IMR-90 (cell line): ENCODE measurements at regions of chr1 and their contacts with region 1.

Region 1: GRCh38 chr1:52296345-52296744 is 69.7 kb downstream of the CC2D1B start:
- DNase-seq: peak; percentile 68
- ATAC-seq: peak; percentile 92
- H3K4me3 ChIP-seq: no peak overlapping the region
- H3K27ac ChIP-seq: no peak overlapping the region
- H3K4me1 ChIP-seq: no peaks in the 10 kb centered on the region
- H3K27me3 ChIP-seq: no peaks in the 10 kb centered on the region
- CTCF ChIP-seq: peak; percentile 88
- POLR2A ChIP-seq: no peak
- RAD21 ChIP-seq: peak; percentile 90

Region 2: DNA sequence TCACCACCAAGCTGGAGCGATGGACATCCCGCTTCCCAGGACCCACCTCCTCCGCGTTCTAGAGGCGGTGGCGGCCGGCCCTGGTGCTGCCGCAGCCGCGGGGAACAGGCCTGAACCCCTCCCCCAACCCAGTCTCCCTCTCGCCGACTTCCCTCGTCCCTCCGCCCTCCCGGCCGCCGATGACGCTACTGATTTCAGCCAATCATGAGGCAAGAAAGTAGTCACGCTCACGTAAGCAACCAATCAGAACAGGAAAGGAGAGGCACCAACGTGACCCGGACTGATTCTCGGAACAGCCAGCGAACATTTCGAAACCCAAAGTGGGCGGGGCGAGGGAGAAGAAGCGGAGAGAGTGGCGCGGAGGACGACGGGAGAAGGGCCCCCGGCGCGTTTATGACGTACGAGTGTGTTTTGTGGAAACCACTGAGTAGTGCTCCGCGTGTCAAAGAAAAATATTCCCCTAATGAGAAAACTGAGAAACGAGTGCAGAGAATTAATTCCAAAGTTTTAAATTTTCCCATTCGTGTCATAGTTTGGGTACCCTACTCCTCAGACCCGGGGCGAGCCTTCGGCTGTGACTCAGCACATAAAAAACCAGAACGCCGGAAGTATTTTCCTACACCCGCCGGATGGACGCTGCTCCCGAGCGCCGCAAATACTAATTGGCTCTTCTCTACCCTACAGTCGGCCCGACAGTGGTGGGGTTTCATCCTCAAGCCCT is 417.6 kb before region 1 on chr1 and contains the start of gene NRDC:
- CTCF ChIA-PET with region 1: no interaction called
- POLR2A ChIA-PET with region 1: no interaction called
- dilution Hi-C with region 1: no loop called
- in situ Hi-C with region 1: loop called (anchors 25 kb)
- intact Hi-C with region 1: no loop called
- DNase-seq: peak; percentile 100
- ATAC-seq: peak; percentile 92
- H3K4me3 ChIP-seq: peak within 1 kb of the TSS; percentile 83
- H3K27ac ChIP-seq: peak within 1 kb of the TSS; percentile 95
- H3K4me1 ChIP-seq: peaks cover 3% of the 10 kb centered on the region; the same call in 1 of the 2 replicates
- H3K27me3 ChIP-seq: no peaks in the 10 kb centered on the region
- CTCF ChIP-seq: no peak
- POLR2A ChIP-seq: peak; percentile 88
- RAD21 ChIP-seq: peak; percentile 10; the same call in 1 of the 2 replicates
- total RNA-seq, gene NRDC: 75.8 and 78.0 TPM in 2 replicates

Region 3: DNA sequence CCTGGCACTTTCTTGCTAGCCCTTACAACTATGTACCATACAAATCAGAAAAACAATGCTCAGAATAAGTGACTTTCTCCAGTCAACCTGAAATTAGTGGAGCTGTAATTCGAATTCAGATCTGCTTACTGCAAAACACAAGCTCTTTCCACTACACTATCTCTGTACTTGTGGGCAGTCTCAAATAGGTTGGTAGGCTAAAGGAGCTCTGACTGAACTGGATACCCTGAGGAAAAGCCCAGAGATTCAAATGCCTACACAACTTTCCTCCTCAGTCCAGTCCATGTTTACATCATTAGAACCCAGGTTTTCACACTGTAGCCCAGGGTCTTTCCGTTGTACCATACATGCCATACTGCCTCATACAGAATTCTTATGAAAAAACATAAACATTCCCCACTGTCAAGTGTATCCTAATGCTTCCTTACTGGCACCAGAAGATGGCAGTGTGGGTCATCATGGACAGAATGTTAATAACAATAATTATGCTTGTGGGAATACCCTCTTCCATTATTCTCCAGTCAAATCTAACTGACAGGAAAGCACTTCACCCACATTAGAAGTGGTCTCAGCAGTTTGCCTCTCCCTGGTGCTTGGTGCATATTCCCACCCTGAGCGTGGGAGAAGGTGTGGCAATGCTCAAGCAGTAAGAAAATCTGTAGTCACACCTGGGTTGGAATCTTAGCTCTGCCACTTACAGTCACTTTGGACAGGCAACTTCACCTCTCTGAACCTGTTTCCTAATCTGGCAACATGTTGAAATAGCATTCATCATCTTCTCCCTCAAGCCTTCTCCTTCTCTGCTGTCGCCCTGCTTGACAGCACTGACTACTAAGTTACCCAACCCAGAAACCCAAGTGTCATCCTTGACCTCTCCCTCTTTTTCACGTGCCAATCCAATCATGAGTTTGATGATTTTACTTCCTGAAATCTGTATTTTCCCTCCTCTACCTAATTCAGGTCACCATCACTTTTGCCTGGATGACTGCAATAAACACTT is 168.9 kb before region 1 on chr1:
- CTCF ChIA-PET with region 1: interaction called, 20 read pairs
- POLR2A ChIA-PET with region 1: no interaction called
- dilution Hi-C with region 1: no loop called
- in situ Hi-C with region 1: loop called (anchors 5 kb)
- intact Hi-C with region 1: loop called (anchors 1 kb)
- DNase-seq: peak; percentile 77
- ATAC-seq: peak; percentile 99
- H3K4me3 ChIP-seq: no peak overlapping the region
- H3K27ac ChIP-seq: no peak overlapping the region
- H3K4me1 ChIP-seq: no peaks in the 10 kb centered on the region
- H3K27me3 ChIP-seq: no peaks in the 10 kb centered on the region; the same call in 1 of the 2 replicates
- CTCF ChIP-seq: peak; percentile 87
- POLR2A ChIP-seq: no peak
- RAD21 ChIP-seq: peak; percentile 86

Region 4: DNA sequence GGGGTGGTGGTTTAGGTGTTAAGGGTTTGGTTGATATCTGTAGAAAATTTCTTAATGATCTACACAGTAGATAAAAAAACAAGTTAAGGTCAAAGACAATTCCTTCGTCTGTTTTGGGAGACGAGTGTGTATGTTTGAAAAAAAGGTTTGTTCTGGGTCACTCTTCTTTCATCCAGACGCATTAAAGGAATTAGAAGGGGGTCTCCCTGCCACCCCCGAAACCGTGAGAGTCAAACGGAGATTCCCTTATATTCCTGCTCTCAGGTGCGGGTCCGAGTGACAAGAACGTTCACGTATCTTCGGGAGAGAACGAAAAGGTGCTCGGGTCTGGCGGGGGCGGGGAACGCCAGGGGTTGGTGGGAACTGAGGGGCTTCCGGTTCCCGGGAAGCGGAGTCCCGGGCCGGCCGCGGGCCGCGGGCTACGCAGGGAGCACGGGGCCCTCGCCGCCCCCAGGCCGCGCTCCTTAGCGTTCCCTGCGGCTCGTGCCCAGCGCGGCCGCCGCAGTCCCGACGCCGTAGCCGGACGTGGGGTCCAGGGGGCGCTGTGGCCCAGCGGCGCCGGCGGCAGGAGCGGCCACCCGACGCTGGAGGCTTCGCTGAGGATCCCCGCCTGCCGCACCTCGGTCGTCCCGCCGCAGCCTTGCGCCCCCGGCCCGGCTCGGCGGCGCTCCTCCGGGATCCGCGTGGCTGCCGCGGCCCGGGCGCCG is 154.7 kb before region 1 on chr1 and contains the start of gene ZFYVE9:
- CTCF ChIA-PET with region 1: interaction called, 4 read pairs
- POLR2A ChIA-PET with region 1: interaction called, 4 read pairs
- dilution Hi-C with region 1: no loop called
- in situ Hi-C with region 1: no loop called
- intact Hi-C with region 1: loop called (anchors 1 kb)
- DNase-seq: peak; percentile 76
- ATAC-seq: peak; percentile 91
- H3K4me3 ChIP-seq: peak within 1 kb of the TSS; percentile 86
- H3K27ac ChIP-seq: peak within 1 kb of the TSS; percentile 84
- H3K4me1 ChIP-seq: peaks cover 4% of the 10 kb centered on the region
- H3K27me3 ChIP-seq: no peaks in the 10 kb centered on the region
- CTCF ChIP-seq: peak; percentile 94
- POLR2A ChIP-seq: no peak; the same call in 1 of the 2 replicates
- RAD21 ChIP-seq: peak; percentile 75
- total RNA-seq, gene ZFYVE9: 28.7 and 29.4 TPM in 2 replicates

Region 5: GRCh38 chr1:52253401-52253800 is 42.9 kb before region 1 on chr1:
- CTCF ChIA-PET with region 1: interaction called, 11 read pairs
- POLR2A ChIA-PET with region 1: no interaction called
- dilution Hi-C with region 1: no loop called
- in situ Hi-C with region 1: no loop called
- intact Hi-C with region 1: no loop called
- DNase-seq: no peak
- ATAC-seq: no peak
- H3K4me3 ChIP-seq: no peak overlapping the region
- H3K27ac ChIP-seq: no peak overlapping the region
- H3K4me1 ChIP-seq: no peaks in the 10 kb centered on the region
- H3K27me3 ChIP-seq: no peaks in the 10 kb centered on the region
- CTCF ChIP-seq: no peak
- POLR2A ChIP-seq: no peak
- RAD21 ChIP-seq: no peak